ENCODE measurements at regions of chr1 and their contacts with region 1.

Region 1: GRCh38 chr1:230948301-230948700 is 30.4 kb downstream of the TTC13 start:
- DNase-seq: no peak
- H3K4me3 ChIP-seq: no peak overlapping the region
- H3K4me3 Mint-ChIP-seq: peak overlapping the region; percentile 57
- H3K27ac Mint-ChIP-seq: peak overlapping the region; percentile 90
- H3K4me1 ChIP-seq: peaks cover 29% of the 10 kb centered on the region
- H3K4me1 Mint-ChIP-seq: peaks cover 22% of the 10 kb centered on the region
- H3K27me3 ChIP-seq: no peaks in the 10 kb centered on the region
- H3K27me3 Mint-ChIP-seq: no peaks in the 10 kb centered on the region
- CTCF ChIP-seq: no peak

Region 2: DNA sequence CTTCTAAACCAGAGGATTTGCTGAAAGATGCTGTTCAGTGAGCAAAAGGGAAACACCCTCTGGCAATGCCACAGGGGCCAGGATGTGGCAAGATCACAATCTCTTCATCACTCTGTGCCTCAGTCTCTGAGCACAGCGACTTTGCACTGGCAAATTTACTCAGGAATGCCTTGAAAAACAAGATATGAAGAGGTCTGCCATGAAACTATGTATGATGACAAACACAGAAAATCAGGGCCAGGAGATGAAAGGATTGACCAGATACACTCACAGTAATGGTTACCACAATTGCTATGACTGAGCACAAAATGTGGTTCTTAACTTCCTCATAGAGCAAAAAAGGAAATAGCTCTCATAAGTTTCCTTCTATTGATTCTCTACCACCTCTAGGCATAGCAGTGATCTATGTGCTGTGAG is 24.6 kb after region 1 on chr1:
- CTCF ChIA-PET with region 1: interaction called, 3 read pairs
- POLR2A ChIA-PET with region 1: no interaction called
- intact Hi-C with region 1: loop called (anchors 2 kb)
- DNase-seq: peak; percentile 39 to 57
- H3K4me3 ChIP-seq: no peak overlapping the region
- H3K4me3 Mint-ChIP-seq: peak overlapping the region; percentile 20
- H3K27ac Mint-ChIP-seq: peak overlapping the region; percentile 60
- H3K4me1 ChIP-seq: peaks cover 63% of the 10 kb centered on the region
- H3K4me1 Mint-ChIP-seq: peaks cover 47% of the 10 kb centered on the region
- H3K27me3 ChIP-seq: no peaks in the 10 kb centered on the region
- H3K27me3 Mint-ChIP-seq: no peaks in the 10 kb centered on the region
- CTCF ChIP-seq: no peak

Measured in Caco-2 (cell line).